Esophagus muscularis mucosa (tissue), 4 donors: ENCODE measurements at regions of chr19 and their contacts with region 1.

Region 1: DNA sequence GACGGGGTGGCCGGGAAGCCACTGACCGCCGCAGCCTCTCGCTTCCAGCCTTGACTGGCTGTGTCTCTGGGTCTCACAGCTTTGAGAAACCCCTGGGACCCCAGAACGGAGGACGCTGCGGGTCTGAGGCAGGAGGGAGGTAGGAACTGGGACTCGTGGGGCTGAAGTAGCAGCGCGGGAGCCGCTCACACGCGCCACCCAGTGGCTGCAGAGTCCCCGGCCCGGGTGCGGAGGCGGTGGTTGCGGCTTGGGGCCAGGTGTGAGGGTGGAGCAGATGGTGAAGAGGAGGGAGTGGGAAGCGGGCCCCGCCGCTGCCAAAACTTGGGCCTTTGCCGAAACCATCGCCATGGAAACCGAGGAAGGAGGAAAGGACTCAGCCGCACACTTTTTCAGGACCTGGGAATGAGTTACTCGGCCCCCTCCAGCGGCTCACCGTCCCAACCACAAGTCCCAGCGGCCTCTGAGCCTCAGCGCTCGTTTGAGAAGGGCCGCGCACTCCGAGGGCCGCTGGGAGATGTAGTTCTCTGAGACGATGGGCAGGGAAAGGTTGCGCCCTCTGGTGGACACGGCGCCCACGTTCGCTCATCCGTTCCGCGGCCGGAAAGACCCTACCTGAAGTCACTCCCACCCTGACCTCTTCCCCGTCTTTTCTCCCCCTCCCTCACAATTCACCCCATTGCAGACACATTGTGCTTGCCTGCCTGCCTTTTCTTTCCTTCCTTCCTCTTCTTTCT is 2.2 kb upstream of the SLC17A7 start:
- DNase-seq: peak; percentile 98
- H3K4me3 ChIP-seq: peak overlapping the region; percentile 58 to 84 (median 64)
- H3K27ac ChIP-seq: peak overlapping the region; percentile 71 to 90 (median 76)
- H3K4me1 ChIP-seq: peaks cover 17 to 53% (median 37%) of the 10 kb centered on the region in 4 donors
- H3K27me3 ChIP-seq: peaks cover 0 to 46% (median 25%) of the 10 kb centered on the region in 4 donors
- CTCF ChIP-seq: peak; percentile 74 to 86 (median 75)
- EP300 ChIP-seq: no peak
- POLR2A ChIP-seq: no peak

Region 2: GRCh38 chr19:49224856-49225255 is 218.7 kb before region 1 on chr19:
- intact Hi-C with region 1: loop called (anchors 5 kb)
- DNase-seq: no peak
- H3K4me3 ChIP-seq: no peak overlapping the region
- H3K27ac ChIP-seq: no peak overlapping the region
- H3K4me1 ChIP-seq: peaks cover 0 to 10% (median 6%) of the 10 kb centered on the region in 4 donors
- H3K27me3 ChIP-seq: no peaks in the 10 kb centered on the region
- CTCF ChIP-seq: peak in 1 of 3 experiments; percentile 18
- EP300 ChIP-seq: no peak
- POLR2A ChIP-seq: no peak

Region 3: DNA sequence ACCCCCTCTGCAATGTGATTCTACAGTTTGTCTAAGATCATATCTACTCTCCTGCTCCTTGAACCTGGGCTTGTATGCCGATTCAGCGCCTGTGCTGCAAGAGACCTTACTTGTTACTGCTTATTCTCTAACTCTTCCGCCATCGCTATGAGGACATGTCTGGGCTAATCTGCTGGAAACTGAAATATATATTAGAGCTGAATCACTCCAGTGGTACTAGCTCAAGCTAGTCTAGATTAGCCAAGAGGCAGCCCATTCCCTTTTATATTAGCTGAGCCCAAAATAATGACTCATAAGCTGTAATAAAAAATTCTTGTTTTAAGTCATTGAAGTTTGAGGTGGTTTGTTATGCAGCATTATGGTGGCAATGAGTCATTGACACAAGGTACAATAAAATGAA is 171.3 kb before region 1 on chr19:
- intact Hi-C with region 1: loop called (anchors 5 kb)
- DNase-seq: peak; percentile 64
- H3K4me3 ChIP-seq: no peak overlapping the region
- H3K27ac ChIP-seq: no peak overlapping the region
- H3K4me1 ChIP-seq: no peaks in the 10 kb centered on the region
- H3K27me3 ChIP-seq: peaks cover 0 to 3% (median 0%) of the 10 kb centered on the region in 4 donors
- CTCF ChIP-seq: no peak
- EP300 ChIP-seq: no peak
- POLR2A ChIP-seq: no peak

Region 4: DNA sequence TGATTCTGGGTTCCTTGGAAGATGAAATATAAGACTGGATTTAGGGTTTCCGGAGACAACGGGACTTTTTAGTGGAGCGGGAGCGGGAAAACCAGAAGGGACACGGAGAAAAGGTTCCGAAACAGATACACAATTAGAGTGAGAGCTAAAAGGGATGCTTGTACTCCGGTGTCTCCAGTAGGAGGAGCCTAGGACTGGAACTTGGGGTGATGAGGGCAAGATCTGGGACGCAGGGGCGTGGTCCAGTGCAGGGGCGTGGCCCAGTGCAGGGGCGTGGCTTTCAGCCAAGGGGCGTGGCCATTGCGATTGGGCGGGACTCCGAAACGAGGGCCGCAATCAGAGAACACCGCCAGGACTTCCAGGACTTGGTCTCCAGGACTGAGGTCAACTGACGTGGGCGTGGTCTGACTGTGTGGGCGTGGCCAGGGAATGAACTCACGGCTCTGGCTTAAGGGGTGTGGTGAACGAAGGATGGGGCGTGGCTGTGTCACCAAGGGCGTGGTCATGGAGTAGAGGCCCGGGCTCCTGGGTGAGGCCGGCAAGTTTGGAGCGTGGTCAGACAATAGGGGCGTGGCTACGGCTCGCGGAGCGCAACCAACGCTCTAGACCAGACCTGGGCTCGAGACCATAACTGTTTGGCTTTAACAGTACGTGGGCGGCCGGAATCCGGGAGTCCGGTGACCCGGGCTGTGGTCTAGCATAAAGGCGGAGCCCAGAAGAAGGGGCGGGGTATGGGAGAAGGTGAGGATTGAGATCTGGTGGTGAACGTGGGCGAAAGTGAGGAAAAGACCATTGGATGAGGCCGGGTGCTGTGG is 80.1 kb before region 1 on chr19 and contains the start of gene DKKL1:
- intact Hi-C with region 1: loop called (anchors 2 kb)
- DNase-seq: peak; percentile 100
- H3K4me3 ChIP-seq: peak within 1 kb of the TSS; percentile 59 to 97 (median 90)
- H3K27ac ChIP-seq: peak within 1 kb of the TSS; percentile 88 to 97 (median 94)
- H3K4me1 ChIP-seq: peaks cover 7 to 40% (median 38%) of the 10 kb centered on the region in 4 donors
- H3K27me3 ChIP-seq: no peaks in the 10 kb centered on the region
- CTCF ChIP-seq: peak; percentile 16 to 33 (median 22)
- EP300 ChIP-seq: no peak
- POLR2A ChIP-seq: peak; percentile 48
- total RNA-seq, gene DKKL1: 0.40 to 0.83 (median 0.83) TPM in 3 of 4 donors, not detected in the other

Region 5: GRCh38 chr19:49391581-49392399 is 51.7 kb before region 1 on chr19:
- intact Hi-C with region 1: loop called (anchors 1 kb)
- DNase-seq: no peak
- H3K4me3 ChIP-seq: no peak overlapping the region
- H3K27ac ChIP-seq: no peak overlapping the region
- H3K4me1 ChIP-seq: peaks cover 0 to 14% (median 8%) of the 10 kb centered on the region in 4 donors
- H3K27me3 ChIP-seq: peaks cover 0 to 76% (median 0%) of the 10 kb centered on the region in 4 donors
- CTCF ChIP-seq: peak; percentile 61 to 88 (median 83)
- EP300 ChIP-seq: no peak
- POLR2A ChIP-seq: no peak